ENCODE measurements at regions of chr2 and their contacts with region 1.

Region 1: DNA sequence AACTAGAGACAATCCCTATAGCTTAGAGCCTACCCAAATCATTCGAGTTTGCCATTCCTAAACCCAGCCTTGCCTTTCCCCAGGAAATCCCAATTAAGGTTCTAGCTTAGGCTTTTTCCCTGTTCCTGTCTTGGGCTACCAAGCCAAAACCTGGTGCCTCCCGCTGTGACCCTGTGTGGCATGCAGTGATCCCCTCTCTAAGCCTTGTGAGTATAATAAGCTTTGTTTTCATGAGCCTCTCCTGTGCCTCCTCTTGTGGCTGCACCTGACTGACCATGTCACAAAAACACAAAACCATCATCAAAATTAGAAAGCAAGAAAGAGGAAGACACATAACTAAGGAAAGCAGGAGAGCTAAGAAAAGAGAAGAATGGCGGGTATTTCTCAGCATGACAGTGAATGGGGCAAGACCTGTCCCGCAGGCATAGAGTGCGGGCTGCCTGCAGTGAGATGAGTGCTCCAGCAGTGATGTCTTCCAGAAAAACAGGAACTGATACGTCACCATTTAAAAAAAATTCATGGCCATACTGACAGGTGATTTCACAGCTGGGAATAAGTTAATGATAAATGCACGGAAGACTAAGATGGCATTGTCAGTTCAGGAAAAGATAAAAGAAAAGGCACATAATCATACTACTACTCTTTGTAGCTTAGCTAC is 9.2 kb upstream of the PAIP2B start:
- DNase-seq: no peak
- H3K4me3 ChIP-seq: no peak overlapping the region
- H3K27ac ChIP-seq: no peak overlapping the region
- H3K4me1 ChIP-seq: no peaks in the 10 kb centered on the region
- H3K27me3 ChIP-seq: peaks cover 39% of the 10 kb centered on the region
- CTCF ChIP-seq: no peak

Region 2: GRCh38 chr2:71256421-71256820 is 20.4 kb after region 1 on chr2:
- CTCF ChIA-PET with region 1: no interaction called
- POLR2A ChIA-PET with region 1: no interaction called
- intact Hi-C with region 1: no loop called
- DNase-seq: no peak
- H3K4me3 ChIP-seq: no peak overlapping the region
- H3K27ac ChIP-seq: no peak overlapping the region
- H3K4me1 ChIP-seq: no peaks in the 10 kb centered on the region
- H3K27me3 ChIP-seq: peaks cover 24% of the 10 kb centered on the region; the same call in 1 of the 2 replicates
- CTCF ChIP-seq: no peak

Region 3: DNA sequence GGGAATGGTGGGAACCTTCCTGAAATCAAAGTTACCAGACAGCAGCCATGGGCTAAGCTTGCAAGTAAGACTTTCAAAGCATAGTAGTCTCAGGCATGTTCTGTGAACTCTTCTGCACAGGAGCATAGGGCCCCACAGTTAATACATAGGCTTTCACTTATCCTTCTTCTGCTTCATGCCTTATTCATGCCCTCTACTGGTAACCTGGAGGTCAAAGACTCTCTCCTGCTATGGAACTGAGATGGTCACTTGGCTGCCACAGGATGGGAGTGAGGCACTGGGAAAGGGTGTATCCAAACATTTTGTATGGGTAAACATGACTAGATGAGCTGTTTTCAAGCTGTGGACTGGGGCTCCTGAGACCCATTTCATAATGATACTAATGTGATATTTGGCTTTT is 46.4 kb after region 1 on chr2:
- CTCF ChIA-PET with region 1: no interaction called
- POLR2A ChIA-PET with region 1: no interaction called
- intact Hi-C with region 1: no loop called
- DNase-seq: no peak
- H3K4me3 ChIP-seq: no peak overlapping the region
- H3K27ac ChIP-seq: no peak overlapping the region
- H3K4me1 ChIP-seq: peaks cover 15% of the 10 kb centered on the region
- H3K27me3 ChIP-seq: no peaks in the 10 kb centered on the region
- CTCF ChIP-seq: no peak; the same call in 1 of the 2 replicates

Region 4: GRCh38 chr2:71462056-71462605 is 226.1 kb after region 1 on chr2:
- CTCF ChIA-PET with region 1: no interaction called
- POLR2A ChIA-PET with region 1: interaction called, 11 read pairs
- intact Hi-C with region 1: no loop called
- DNase-seq: no peak
- H3K4me3 ChIP-seq: no peak overlapping the region
- H3K27ac ChIP-seq: no peak overlapping the region
- H3K4me1 ChIP-seq: peaks cover 38% of the 10 kb centered on the region
- H3K27me3 ChIP-seq: no peaks in the 10 kb centered on the region
- CTCF ChIP-seq: no peak

Region 5: GRCh38 chr2:71477231-71477691 is 241.2 kb after region 1 on chr2:
- CTCF ChIA-PET with region 1: no interaction called
- POLR2A ChIA-PET with region 1: no interaction called
- intact Hi-C with region 1: no loop called
- DNase-seq: peak in 1 of 2 experiments; percentile 62
- H3K4me3 ChIP-seq: no peak overlapping the region
- H3K27ac ChIP-seq: 0 out of 2 replicates have a peak overlapping the region, but pooled peaks have one; percentile 16
- H3K4me1 ChIP-seq: peaks cover 15% of the 10 kb centered on the region
- H3K27me3 ChIP-seq: no peaks in the 10 kb centered on the region
- CTCF ChIP-seq: no peak

Measured in PC-9 (cell line).